ENCODE measurements at regions of chr4 and their contacts with region 1.

Region 1: GRCh38 chr4:47914220-47914925 is at the start of gene NFXL1:
- DNase-seq: peak; percentile 90 to 95 (median 93)
- ATAC-seq: peak; percentile 98
- H3K4me3 ChIP-seq: peak within 1 kb of the TSS; percentile 92
- H3K4me3 Mint-ChIP-seq: peak within 1 kb of the TSS; percentile 93 to 99 (median 96)
- H3K27ac ChIP-seq: peak within 1 kb of the TSS; percentile 88
- H3K27ac Mint-ChIP-seq: peak within 1 kb of the TSS; percentile 89 to 98 (median 96)
- H3K4me1 ChIP-seq: peaks cover 12 to 15% of the 10 kb centered on the region in 2 donors
- H3K4me1 Mint-ChIP-seq: peaks cover 18 to 41% (median 32%) of the 10 kb centered on the region in 7 donors
- H3K27me3 ChIP-seq: no peaks in the 10 kb centered on the region
- H3K27me3 Mint-ChIP-seq: no peaks in the 10 kb centered on the region
- total RNA-seq, gene NFXL1: 10.4 to 19.3 (median 13.2) TPM

Region 2: GRCh38 chr4:47463235-47463956 is 451.0 kb before region 1 on chr4 and contains the start of gene COMMD8:
- CTCF ChIA-PET with region 1: no interaction called
- POLR2A ChIA-PET with region 1: no interaction called
- intact Hi-C with region 1: loop called (anchors 1 kb)
- DNase-seq: peak; percentile 91 to 97 (median 95)
- ATAC-seq: peak; percentile 93
- H3K4me3 ChIP-seq: peak within 1 kb of the TSS; percentile 82
- H3K4me3 Mint-ChIP-seq: peak within 1 kb of the TSS; percentile 77 to 93 (median 90)
- H3K27ac ChIP-seq: peak within 1 kb of the TSS; percentile 74
- H3K27ac Mint-ChIP-seq: peak within 1 kb of the TSS; percentile 76 to 97 (median 95)
- H3K4me1 ChIP-seq: peaks cover 9 to 17% of the 10 kb centered on the region in 2 donors
- H3K4me1 Mint-ChIP-seq: peaks cover 20 to 48% (median 38%) of the 10 kb centered on the region in 7 donors
- H3K27me3 ChIP-seq: no peaks in the 10 kb centered on the region
- H3K27me3 Mint-ChIP-seq: no peaks in the 10 kb centered on the region
- total RNA-seq, gene COMMD8: 8.4 to 19.3 (median 16.7) TPM

Region 3: GRCh38 chr4:47741200-47741599 is 173.2 kb before region 1 on chr4:
- CTCF ChIA-PET with region 1: no interaction called
- POLR2A ChIA-PET with region 1: no interaction called
- intact Hi-C with region 1: no loop called
- DNase-seq: no peak
- ATAC-seq: no peak
- H3K4me3 ChIP-seq: no peak overlapping the region
- H3K4me3 Mint-ChIP-seq: no peak overlapping the region
- H3K27ac ChIP-seq: no peak overlapping the region
- H3K27ac Mint-ChIP-seq: no peak overlapping the region
- H3K4me1 ChIP-seq: no peaks in the 10 kb centered on the region
- H3K4me1 Mint-ChIP-seq: no peaks in the 10 kb centered on the region
- H3K27me3 ChIP-seq: peaks cover 0 to 4% of the 10 kb centered on the region in 2 donors
- H3K27me3 Mint-ChIP-seq: peaks cover 4 to 17% (median 14%) of the 10 kb centered on the region in 5 donors

Region 4: GRCh38 chr4:47836641-47837093 is 77.7 kb before region 1 on chr4:
- CTCF ChIA-PET with region 1: no interaction called
- POLR2A ChIA-PET with region 1: interaction called, 3 read pairs
- intact Hi-C with region 1: loop called (anchors 1 to 5 kb)
- DNase-seq: peak; percentile 12 to 50 (median 31)
- ATAC-seq: peak; percentile 68
- H3K4me3 ChIP-seq: peak overlapping the region; percentile 68
- H3K4me3 Mint-ChIP-seq: peak overlapping the region; percentile 84 to 91 (median 88)
- H3K27ac ChIP-seq: no peak overlapping the region
- H3K27ac Mint-ChIP-seq: peak overlapping the region in 2 of 9 donors; percentile 9 to 17
- H3K4me1 ChIP-seq: peaks cover 6% of the 10 kb centered on the region in 2 donors
- H3K4me1 Mint-ChIP-seq: peaks cover 5 to 32% (median 24%) of the 10 kb centered on the region in 7 donors
- H3K27me3 ChIP-seq: no peaks in the 10 kb centered on the region
- H3K27me3 Mint-ChIP-seq: peaks cover 0 to 51% (median 11%) of the 10 kb centered on the region in 5 donors

Region 5: DNA sequence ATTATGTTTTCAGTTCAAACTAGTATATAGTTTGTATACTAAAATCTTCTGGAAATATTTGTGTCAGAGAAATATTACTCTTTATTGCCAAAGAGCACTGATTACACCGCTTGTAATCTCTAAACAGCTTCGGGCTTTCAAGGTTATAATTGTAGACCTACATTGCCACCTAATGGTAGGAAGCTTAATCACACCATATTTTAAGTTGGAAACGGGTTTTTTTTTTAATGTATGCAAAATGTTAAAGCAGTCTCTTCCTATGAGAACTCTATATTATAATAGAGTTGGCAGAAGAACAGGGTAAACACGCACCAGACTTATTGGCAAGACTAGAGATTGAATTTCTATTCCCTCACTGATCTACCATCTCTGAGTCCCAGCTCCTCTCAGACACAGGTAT is 19.5 kb after region 1 on chr4:
- CTCF ChIA-PET with region 1: no interaction called
- POLR2A ChIA-PET with region 1: no interaction called
- intact Hi-C with region 1: no loop called
- DNase-seq: peak in 7 of 9 donors; percentile 23 to 58 (median 51)
- ATAC-seq: peak; percentile 86
- H3K4me3 ChIP-seq: no peak overlapping the region
- H3K4me3 Mint-ChIP-seq: no peak overlapping the region
- H3K27ac ChIP-seq: no peak overlapping the region
- H3K27ac Mint-ChIP-seq: no peak overlapping the region
- H3K4me1 ChIP-seq: no peaks in the 10 kb centered on the region
- H3K4me1 Mint-ChIP-seq: peaks cover 0 to 5% (median 0%) of the 10 kb centered on the region in 7 donors
- H3K27me3 ChIP-seq: no peaks in the 10 kb centered on the region
- H3K27me3 Mint-ChIP-seq: peaks cover 0 to 21% (median 7%) of the 10 kb centered on the region in 5 donors

Region 6: GRCh38 chr4:48085821-48086607 is 171.6 kb after region 1 on chr4:
- CTCF ChIA-PET with region 1: no interaction called
- POLR2A ChIA-PET with region 1: no interaction called
- intact Hi-C with region 1: loop called in 1 of 2 experiments (anchors 5 kb)
- DNase-seq: no peak
- ATAC-seq: no peak
- H3K4me3 ChIP-seq: no peak overlapping the region
- H3K4me3 Mint-ChIP-seq: no peak overlapping the region
- H3K27ac ChIP-seq: no peak overlapping the region
- H3K27ac Mint-ChIP-seq: peak overlapping the region in 4 of 9 donors; percentile 36 to 78 (median 56)
- H3K4me1 ChIP-seq: no peaks in the 10 kb centered on the region
- H3K4me1 Mint-ChIP-seq: peaks cover 0 to 40% (median 14%) of the 10 kb centered on the region in 7 donors
- H3K27me3 ChIP-seq: no peaks in the 10 kb centered on the region
- H3K27me3 Mint-ChIP-seq: no peaks in the 10 kb centered on the region

Region 7: DNA sequence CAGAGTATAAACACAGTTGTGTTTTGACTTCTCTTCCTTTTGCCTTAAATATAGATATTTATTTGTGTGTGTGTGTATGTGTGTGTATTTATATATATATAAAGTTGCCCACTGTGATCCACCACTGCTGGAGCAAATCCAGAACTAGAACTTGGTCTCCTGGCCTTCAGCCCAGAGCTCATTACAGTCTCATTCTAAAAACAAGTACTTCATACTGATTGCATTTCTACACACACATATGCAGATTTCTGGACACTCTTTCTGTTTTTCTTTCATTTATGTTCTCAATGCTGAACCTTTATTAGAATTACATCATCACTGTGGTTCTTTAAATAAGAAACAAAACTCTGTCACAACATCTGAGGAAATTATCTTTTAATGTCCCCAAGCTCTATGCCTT is 219.3 kb after region 1 on chr4:
- CTCF ChIA-PET with region 1: no interaction called
- POLR2A ChIA-PET with region 1: interaction called, 3 read pairs
- intact Hi-C with region 1: loop called (anchors 1 to 2 kb)
- DNase-seq: no peak
- ATAC-seq: no peak
- H3K4me3 ChIP-seq: peak overlapping the region; percentile 61
- H3K4me3 Mint-ChIP-seq: peak overlapping the region in 9 of 10 donors; percentile 91 to 99 (median 94)
- H3K27ac ChIP-seq: peak overlapping the region; percentile 79
- H3K27ac Mint-ChIP-seq: peak overlapping the region in 7 of 9 donors; percentile 82 to 97 (median 93)
- H3K4me1 ChIP-seq: peaks cover 65 to 68% of the 10 kb centered on the region in 2 donors
- H3K4me1 Mint-ChIP-seq: peaks cover 47 to 83% (median 75%) of the 10 kb centered on the region in 7 donors
- H3K27me3 ChIP-seq: no peaks in the 10 kb centered on the region
- H3K27me3 Mint-ChIP-seq: no peaks in the 10 kb centered on the region

Region 8: GRCh38 chr4:48830706-48831531 is 916.5 kb after region 1 on chr4 and contains the start of gene OCIAD1:
- CTCF ChIA-PET with region 1: no interaction called
- POLR2A ChIA-PET with region 1: no interaction called
- intact Hi-C with region 1: loop called (anchors 1 kb)
- DNase-seq: peak; percentile 80 to 98 (median 93)
- ATAC-seq: peak; percentile 98
- H3K4me3 ChIP-seq: peak within 1 kb of the TSS; percentile 98
- H3K4me3 Mint-ChIP-seq: peak within 1 kb of the TSS; percentile 96 to 100 (median 100)
- H3K27ac ChIP-seq: peak within 1 kb of the TSS; percentile 91
- H3K27ac Mint-ChIP-seq: peak within 1 kb of the TSS; percentile 98 to 100 (median 100)
- H3K4me1 ChIP-seq: peaks cover 10 to 12% of the 10 kb centered on the region in 2 donors
- H3K4me1 Mint-ChIP-seq: peaks cover 10 to 44% (median 36%) of the 10 kb centered on the region in 7 donors
- H3K27me3 ChIP-seq: no peaks in the 10 kb centered on the region
- H3K27me3 Mint-ChIP-seq: peaks cover 0 to 4% (median 4%) of the 10 kb centered on the region in 5 donors
- total RNA-seq, gene OCIAD1: 85.6 to 128 (median 102) TPM